Transverse colon (tissue), 4 donors: ENCODE measurements at regions of chr16 and their contacts with region 1.

Region 1: GRCh38 chr16:17343028-17343427 is 127.7 kb downstream of the XYLT1 start:
- DNase-seq: peak; percentile 54
- H3K4me3 ChIP-seq: no peak overlapping the region
- H3K27ac ChIP-seq: peak overlapping the region; percentile 52 to 87 (median 86)
- H3K4me1 ChIP-seq: peaks cover 23 to 65% (median 39%) of the 10 kb centered on the region in 4 donors
- H3K27me3 ChIP-seq: no peaks in the 10 kb centered on the region
- CTCF ChIP-seq: no peak
- EP300 ChIP-seq: no peak
- POLR2A ChIP-seq: no peak

Region 2: GRCh38 chr16:17313085-17313611 is 29.9 kb before region 1 on chr16:
- in situ Hi-C with region 1: no loop called
- intact Hi-C with region 1: loop called (anchors 2 kb)
- DNase-seq: peak; percentile 46
- H3K4me3 ChIP-seq: no peak overlapping the region
- H3K27ac ChIP-seq: peak overlapping the region; percentile 78 to 88 (median 84)
- H3K4me1 ChIP-seq: peaks cover 23 to 48% (median 34%) of the 10 kb centered on the region in 4 donors
- H3K27me3 ChIP-seq: no peaks in the 10 kb centered on the region
- CTCF ChIP-seq: no peak
- EP300 ChIP-seq: peak; percentile 99
- POLR2A ChIP-seq: no peak

Region 3: GRCh38 chr16:17380613-17381012 is 37.6 kb after region 1 on chr16:
- in situ Hi-C with region 1: no loop called
- intact Hi-C with region 1: loop called (anchors 5 kb)
- DNase-seq: no peak
- H3K4me3 ChIP-seq: no peak overlapping the region
- H3K27ac ChIP-seq: peak overlapping the region; percentile 72 to 84 (median 78)
- H3K4me1 ChIP-seq: peaks cover 18 to 62% (median 37%) of the 10 kb centered on the region in 4 donors
- H3K27me3 ChIP-seq: no peaks in the 10 kb centered on the region
- CTCF ChIP-seq: no peak
- EP300 ChIP-seq: peak; percentile 68
- POLR2A ChIP-seq: peak; percentile 38

Region 4: GRCh38 chr16:17633104-17633951 is 290.3 kb after region 1 on chr16:
- in situ Hi-C with region 1: no loop called
- intact Hi-C with region 1: no loop called
- DNase-seq: no peak
- H3K4me3 ChIP-seq: no peak overlapping the region
- H3K27ac ChIP-seq: no peak overlapping the region
- H3K4me1 ChIP-seq: no peaks in the 10 kb centered on the region
- H3K27me3 ChIP-seq: peaks cover 4% of the 10 kb centered on the region
- CTCF ChIP-seq: no peak
- EP300 ChIP-seq: no peak
- POLR2A ChIP-seq: no peak